A549 (cell line): ENCODE measurements at regions of chr3 and their contacts with region 1.

Region 1: GRCh38 chr3:100260685-100261484 is at the start of gene TBC1D23:
- DNase-seq: peak; percentile 98 to 100
- ATAC-seq: peak; percentile 100
- H3K4me3 ChIP-seq: peak within 1 kb of the TSS; percentile 88
- H3K27ac ChIP-seq: peak within 1 kb of the TSS; percentile 91 to 94
- H3K4me1 ChIP-seq: peaks cover 10% of the 10 kb centered on the region; the same call in 2 of the 3 replicates
- CTCF ChIP-seq: no peak
- EP300 ChIP-seq: no peak
- POLR2A ChIP-seq: peak; percentile 59
- RAD21 ChIP-seq: no peak
- polyA plus RNA-seq, gene TBC1D23: 29.4 and 31.3 TPM in 2 replicates

Region 2: GRCh38 chr3:100400780-100401673 is 140.1 kb after region 1 on chr3 and contains the starts of genes LNP1 and TOMM70:
- CTCF ChIA-PET with region 1: no interaction called
- POLR2A ChIA-PET with region 1: interaction called, 11 read pairs
- DNase-seq: peak; percentile 76 to 97
- ATAC-seq: peak; percentile 96
- H3K4me3 ChIP-seq: peak within 1 kb of the TSS; percentile 91
- H3K27ac ChIP-seq: peak within 1 kb of the TSS; percentile 93 to 97
- H3K4me1 ChIP-seq: peaks cover 32% of the 10 kb centered on the region; the same call in 1 of the 3 replicates
- CTCF ChIP-seq: no peak
- EP300 ChIP-seq: no peak
- POLR2A ChIP-seq: peak; percentile 83
- RAD21 ChIP-seq: no peak
- polyA plus RNA-seq, gene LNP1: 1.2 and 2.0 TPM in 2 replicates
- polyA plus RNA-seq, gene TOMM70: 48.6 and 61.8 TPM in 2 replicates